AG04449 (cell line): ENCODE measurements at regions of chr5 and their contacts with region 1.

Region 1: DNA sequence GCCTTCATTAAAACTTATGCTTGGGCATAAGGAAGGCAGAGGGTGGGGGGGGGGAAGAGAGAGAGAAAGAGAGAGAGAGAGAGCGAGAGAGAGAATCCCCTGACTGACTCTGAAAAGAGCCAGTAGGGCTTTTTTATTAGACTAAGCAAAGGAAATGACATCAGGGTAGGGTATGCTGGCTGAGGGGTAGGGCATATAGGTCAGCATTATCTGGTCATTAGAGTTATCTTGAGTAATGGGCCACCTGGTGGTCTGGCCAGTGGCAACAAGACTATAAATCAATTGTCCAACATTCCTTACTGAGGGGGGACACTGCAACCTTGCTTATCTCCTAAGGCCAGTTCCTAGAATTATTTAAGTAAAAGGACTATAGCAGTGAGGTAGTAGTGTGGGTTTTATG is 67.2 kb downstream of the TSSK1B start:
- DNase-seq: no peak
- H3K4me3 ChIP-seq: no peak overlapping the region
- CTCF ChIP-seq: no peak

Region 2: GRCh38 chr5:113378959-113379541 is 11.5 kb after region 1 on chr5:
- CTCF ChIA-PET with region 1: interaction called, 10 read pairs
- POLR2A ChIA-PET with region 1: no interaction called
- DNase-seq: peak; percentile 3
- H3K4me3 ChIP-seq: no peak overlapping the region
- CTCF ChIP-seq: peak; percentile 71